Activated CD4-positive, alpha-beta memory T cell treated with anti-CD3 and anti-CD28 coated beads, Interleukin-2, amount 10 ng/mL, durations not matched to agents 7 days and 5 days (primary cell): ENCODE measurements at regions of chr5 and their contacts with region 1.

Region 1: DNA sequence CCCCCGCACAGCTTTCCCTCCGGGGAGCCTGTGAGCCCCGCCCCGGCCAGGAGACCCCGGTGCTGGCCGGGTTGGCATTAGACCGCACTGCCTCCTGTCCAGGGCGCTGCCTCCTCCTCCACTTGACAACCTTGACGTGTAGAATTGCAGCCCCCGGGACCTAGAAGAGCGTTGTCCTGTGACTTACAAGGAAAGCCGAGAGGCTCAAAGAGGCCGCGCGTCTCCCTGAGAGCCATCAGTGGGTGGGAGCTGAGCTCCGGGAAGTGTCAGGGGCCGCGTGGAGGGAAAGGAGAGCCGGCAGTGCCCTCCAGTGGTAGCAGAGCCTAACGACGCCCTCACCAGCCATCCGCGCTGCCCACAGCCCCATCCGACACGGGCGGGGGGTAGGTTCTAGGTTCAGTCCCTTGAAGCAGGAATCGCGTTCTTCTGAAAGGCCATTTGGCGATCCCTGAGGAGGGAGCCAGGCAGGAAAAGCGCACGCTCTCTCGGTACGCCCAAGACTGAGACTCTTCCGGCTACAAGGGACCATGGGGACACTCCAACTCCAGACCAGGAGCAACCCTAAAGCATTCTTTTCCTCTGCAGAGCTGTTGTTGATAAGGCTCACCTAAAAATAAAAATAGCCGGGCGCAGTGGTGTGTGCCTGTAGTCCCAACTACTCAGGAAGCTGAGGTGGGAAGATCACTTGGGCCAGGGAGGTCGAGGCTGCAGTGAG is 40.6 kb upstream of the SAP30L start:
- DNase-seq: peak; percentile 77
- H3K4me3 Mint-ChIP-seq: no peak overlapping the region
- H3K27ac Mint-ChIP-seq: no peak overlapping the region
- H3K4me1 Mint-ChIP-seq: peaks cover 8% of the 10 kb centered on the region
- H3K27me3 Mint-ChIP-seq: no peaks in the 10 kb centered on the region

Region 2: DNA sequence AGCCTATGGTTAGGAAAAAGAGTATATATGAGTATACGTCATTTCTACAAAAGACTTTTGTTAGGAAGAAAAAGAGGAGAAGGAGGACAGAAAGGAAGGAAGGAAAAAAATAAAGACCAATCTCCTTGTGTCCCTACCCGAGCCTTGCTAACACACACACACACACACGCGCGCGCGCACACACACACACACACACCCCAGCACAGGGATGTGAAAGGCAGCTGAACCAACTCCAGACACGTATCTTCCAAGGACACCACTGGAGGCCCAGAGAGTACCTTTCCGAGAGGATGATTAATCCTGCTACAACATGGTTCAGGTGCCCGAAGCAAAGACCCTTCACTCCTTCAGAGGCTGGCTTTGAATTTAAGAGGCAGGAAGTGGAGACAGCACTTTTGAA is 271.6 kb before region 1 on chr5:
- CTCF ChIA-PET with region 1: no interaction called
- POLR2A ChIA-PET with region 1: no interaction called
- DNase-seq: no peak
- H3K4me3 Mint-ChIP-seq: no peak overlapping the region
- H3K27ac Mint-ChIP-seq: no peak overlapping the region
- H3K4me1 Mint-ChIP-seq: no peaks in the 10 kb centered on the region
- H3K27me3 Mint-ChIP-seq: peaks cover 21% of the 10 kb centered on the region

Region 3: DNA sequence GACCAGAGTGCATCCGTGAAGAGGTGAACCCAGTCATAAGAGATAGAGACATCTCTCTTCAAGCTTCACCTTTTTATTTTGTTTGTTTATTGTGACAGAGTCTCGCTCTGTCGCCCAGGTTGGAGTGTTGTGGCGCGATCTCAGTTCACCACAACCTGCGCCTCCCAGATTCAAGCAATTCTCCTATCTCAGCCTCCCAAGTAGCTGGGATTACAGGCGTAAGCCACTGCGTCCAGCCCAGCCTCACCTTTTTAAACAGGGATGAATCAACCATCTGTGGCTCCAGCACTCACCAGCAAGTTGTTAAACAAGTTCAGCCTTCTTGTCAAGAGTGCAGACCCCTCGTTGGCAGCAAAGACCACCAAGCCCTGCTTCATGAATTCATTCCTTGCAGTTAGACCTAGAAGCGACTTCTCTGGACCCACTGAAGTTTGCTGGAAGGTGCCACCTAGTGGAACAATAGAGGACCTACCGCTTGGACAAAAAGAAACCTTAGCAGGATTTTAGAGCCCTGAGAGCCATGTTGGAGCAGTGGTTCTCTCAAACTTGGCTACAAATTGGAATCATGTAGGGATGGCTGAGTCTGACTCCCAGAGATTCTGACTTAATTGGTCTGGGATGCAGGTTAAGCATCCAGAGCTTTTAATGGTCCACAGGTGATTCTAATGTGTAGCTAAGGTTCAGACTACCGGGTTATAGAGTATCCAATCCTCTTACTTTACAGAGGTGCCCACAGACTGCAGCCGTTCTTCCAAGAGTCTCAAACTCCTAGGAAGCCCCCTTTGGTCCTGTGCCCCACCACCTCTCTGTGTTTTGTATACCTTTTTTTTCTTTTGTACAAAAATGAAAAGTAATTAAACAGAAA is 225.2 kb before region 1 on chr5:
- CTCF ChIA-PET with region 1: interaction called, 25 read pairs
- POLR2A ChIA-PET with region 1: no interaction called
- DNase-seq: peak; percentile 42
- H3K4me3 Mint-ChIP-seq: no peak overlapping the region
- H3K27ac Mint-ChIP-seq: no peak overlapping the region
- H3K4me1 Mint-ChIP-seq: peaks cover 21% of the 10 kb centered on the region
- H3K27me3 Mint-ChIP-seq: peaks cover 16% of the 10 kb centered on the region

Region 4: GRCh38 chr5:154380259-154380658 is 25.0 kb before region 1 on chr5:
- CTCF ChIA-PET with region 1: no interaction called
- POLR2A ChIA-PET with region 1: no interaction called
- DNase-seq: no peak
- H3K4me3 Mint-ChIP-seq: no peak overlapping the region
- H3K27ac Mint-ChIP-seq: no peak overlapping the region
- H3K4me1 Mint-ChIP-seq: peaks cover 14% of the 10 kb centered on the region
- H3K27me3 Mint-ChIP-seq: no peaks in the 10 kb centered on the region